AG04449 (cell line): ENCODE measurements at regions of chr1 and their contacts with region 1.

Region 1: DNA sequence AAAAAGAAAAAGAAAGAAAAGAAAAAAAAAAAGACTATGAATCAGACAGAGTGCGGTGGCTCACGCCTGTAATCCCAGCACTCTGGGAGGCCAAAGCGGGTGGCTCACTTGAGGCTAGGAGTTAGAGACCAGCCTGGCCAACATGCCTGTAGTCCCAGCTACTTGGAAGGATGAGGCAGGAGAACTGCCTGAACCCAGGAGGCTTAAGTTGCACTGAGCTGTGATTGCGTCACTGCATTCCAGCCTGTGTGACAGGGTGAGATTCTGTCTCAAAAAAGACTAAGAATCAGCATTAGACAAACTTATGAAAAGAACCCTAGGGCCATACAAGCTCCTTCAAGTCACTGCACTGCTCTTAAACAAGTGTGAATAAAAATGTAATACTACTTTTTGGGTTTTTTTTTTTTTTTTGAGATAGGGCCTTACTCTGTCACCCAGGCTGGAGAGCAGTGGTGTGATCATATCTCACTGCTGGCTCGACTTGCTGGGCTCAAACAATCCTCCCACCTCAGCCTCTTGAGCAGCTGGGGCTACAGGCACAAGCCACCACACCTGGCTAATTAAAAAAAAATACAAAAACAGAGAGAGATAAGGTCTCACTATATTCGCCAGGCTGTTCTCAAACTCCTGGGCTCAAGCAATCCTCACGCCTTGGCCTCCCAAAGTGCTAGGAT is 17.0 kb downstream of the PSMB4 start:
- DNase-seq: peak; percentile 65
- H3K4me3 ChIP-seq: no peak overlapping the region
- CTCF ChIP-seq: no peak

Region 2: DNA sequence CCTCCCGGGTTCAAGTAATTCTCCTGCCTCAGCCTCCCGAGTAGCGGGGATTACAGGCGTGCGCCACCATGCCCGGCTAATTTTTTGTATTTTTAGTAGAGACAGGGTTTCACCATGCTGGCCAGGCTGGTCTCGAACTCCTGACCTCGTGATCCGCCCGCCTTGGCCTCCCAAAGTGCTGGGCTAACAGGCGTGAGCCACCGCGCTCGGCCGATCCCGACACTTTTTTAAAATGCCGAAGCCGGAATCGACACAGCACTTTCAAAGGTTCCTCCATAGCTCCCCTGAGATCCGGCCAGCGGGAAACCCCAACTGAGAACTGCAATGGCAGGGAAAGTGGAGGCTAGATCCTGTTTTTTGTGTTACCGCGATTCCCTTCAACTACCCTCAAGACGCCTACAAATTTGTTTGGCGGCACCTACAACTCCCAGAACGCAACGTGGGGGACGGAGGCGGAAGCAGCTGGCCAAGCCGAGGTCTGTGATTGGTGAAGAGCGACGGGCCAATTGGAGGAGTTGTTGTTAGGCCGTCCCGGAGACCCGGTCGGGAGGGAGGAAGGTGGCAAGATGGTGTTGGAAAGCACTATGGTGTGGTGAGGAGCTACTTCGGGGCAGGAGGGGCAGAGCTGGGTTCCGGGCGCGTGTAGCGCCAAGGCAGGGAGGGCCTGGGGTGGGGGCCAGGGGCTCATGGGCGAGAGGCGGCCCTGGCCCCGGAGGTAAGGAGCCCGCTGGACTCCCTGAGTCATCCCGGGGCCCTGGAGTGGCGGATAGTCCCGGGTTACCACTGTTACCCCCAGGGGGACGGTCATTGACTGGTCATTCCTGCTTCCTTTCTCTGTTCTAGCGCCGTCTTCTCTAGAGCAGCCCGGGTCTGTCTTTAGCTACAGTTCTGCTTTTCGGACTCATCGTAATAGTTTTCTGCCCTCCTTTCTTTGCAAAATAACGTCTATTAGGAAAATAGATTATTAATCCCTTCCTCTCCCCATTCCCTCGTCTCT is 161.9 kb before region 1 on chr1 and contains the start of gene PSMD4:
- CTCF ChIA-PET with region 1: no interaction called
- POLR2A ChIA-PET with region 1: no interaction called
- DNase-seq: peak; percentile 81
- H3K4me3 ChIP-seq: peak within 1 kb of the TSS; percentile 80
- CTCF ChIP-seq: peak; percentile 7

Region 3: DNA sequence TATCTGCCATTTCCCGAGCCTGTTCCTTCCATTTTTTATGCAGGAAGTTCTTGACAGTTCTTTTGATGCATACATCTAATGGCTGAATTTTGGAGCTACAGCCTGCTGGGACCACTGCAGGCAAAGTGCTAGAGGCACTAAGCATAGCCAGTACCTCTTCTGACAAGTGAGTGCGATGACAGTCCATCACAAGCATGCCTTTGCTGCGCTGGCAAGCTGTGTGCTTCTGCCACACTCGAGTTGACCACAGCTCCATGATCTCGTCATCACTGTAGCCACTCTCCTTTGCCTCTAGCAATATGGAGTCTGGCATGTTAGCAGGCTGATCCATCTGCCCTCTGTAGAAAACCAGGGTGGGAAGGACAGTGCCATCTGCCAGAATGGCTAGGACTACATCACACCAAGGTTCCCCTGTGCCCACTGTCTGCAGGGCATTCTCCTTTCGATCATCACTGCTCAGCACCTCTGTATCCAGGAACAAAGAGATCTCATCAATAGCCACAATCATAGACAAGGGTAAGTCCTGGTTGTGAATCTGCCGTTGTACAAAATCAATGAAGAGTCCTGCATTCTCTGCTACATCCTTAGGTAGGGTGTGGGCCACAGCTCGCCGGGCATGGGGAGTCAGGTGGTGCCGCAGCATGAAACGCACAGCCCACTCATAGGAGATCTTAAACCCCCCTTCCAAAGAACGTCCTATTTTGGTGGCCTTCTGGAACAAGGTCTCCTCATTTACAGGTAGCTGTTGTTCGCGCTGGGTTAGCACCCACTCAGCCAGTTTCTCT is 11.0 kb before region 1 on chr1:
- CTCF ChIA-PET with region 1: interaction called, 10 read pairs
- POLR2A ChIA-PET with region 1: interaction called, 3 read pairs
- DNase-seq: no peak
- H3K4me3 ChIP-seq: no peak overlapping the region
- CTCF ChIP-seq: no peak